ENCODE measurements at regions of chr1 and their contacts with region 1.

Region 1: DNA sequence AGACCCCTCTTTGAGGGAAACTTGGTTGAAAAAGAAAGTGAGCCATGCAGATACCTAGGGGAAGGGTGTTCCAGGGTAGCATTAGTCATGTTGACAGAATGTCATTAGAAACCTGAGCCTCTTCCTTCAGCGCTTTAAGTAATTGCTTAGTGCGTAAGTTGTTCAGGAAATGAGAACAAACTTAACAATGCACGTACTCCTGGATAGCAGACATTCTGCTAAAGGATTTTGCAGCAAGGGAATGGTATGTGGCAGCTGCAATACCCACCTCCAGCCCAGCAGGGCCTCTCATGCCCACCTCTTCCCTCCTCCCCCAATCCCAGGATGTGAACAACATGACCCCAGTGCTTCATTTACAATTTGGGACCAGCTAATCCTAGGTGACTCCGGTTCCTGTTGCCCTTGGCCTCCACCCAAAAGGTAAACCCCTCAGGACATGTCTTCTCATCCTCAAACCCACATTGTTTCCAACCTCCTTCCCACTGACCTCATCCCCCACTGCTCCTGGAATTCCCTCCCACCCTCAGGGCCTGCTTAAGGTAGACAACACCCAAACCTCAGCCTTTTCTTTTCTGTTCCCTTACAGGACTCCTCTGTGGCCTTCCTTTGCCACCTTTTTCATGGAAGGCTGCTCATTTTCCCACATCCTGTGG is 98.0 kb upstream of the BCAR3 start:
- DNase-seq: peak; percentile 100
- H3K4me3 Mint-ChIP-seq: peak overlapping the region; percentile 44
- H3K27ac Mint-ChIP-seq: peak overlapping the region; percentile 92
- H3K4me1 Mint-ChIP-seq: peaks cover 51% of the 10 kb centered on the region
- H3K27me3 Mint-ChIP-seq: no peaks in the 10 kb centered on the region
- CTCF ChIP-seq: no peak

Region 2: DNA sequence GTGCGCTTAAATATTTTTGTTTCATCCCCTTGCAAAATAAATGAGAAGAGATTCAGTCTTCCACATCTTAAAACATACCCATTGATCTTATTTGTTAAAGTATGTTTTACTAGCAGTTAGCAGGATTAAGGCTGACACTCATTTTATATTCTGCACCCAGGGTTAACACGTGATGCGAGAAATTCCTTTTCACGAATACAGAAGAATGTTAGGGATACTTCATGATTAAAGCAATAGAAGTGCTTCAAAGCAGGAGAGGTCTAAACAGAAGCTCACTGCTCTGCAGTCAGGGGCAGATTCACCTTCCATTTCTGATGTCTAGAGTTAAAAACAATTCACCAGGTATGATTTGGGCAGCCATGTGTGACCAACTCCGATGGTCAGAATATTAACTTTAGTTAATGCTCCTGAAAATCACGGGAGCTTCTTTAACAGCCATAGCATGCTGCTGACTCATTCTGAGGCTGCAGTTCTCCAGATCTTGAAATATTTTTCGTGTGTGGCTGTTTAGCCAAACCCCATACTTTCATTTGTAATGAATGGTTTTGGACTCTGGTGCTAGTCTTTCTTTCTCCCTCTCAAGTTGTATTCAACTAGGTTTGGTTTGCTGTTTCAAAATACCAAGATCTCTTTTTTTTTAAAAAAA is 117.7 kb before region 1 on chr1:
- CTCF ChIA-PET with region 1: interaction called, 5 read pairs
- POLR2A ChIA-PET with region 1: interaction called, 12 read pairs
- intact Hi-C with region 1: no loop called
- DNase-seq: peak; percentile 46
- H3K4me3 Mint-ChIP-seq: peak overlapping the region; percentile 43
- H3K27ac Mint-ChIP-seq: peak overlapping the region; percentile 91
- H3K4me1 Mint-ChIP-seq: peaks cover 60% of the 10 kb centered on the region
- H3K27me3 Mint-ChIP-seq: no peaks in the 10 kb centered on the region
- CTCF ChIP-seq: no peak

Region 3: GRCh38 chr1:93692983-93693591 is 86.6 kb before region 1 on chr1:
- CTCF ChIA-PET with region 1: interaction called, 3 read pairs
- POLR2A ChIA-PET with region 1: interaction called, 46 read pairs
- intact Hi-C with region 1: no loop called
- DNase-seq: peak; percentile 86
- H3K4me3 Mint-ChIP-seq: no peak overlapping the region
- H3K27ac Mint-ChIP-seq: no peak overlapping the region
- H3K4me1 Mint-ChIP-seq: no peaks in the 10 kb centered on the region
- H3K27me3 Mint-ChIP-seq: no peaks in the 10 kb centered on the region
- CTCF ChIP-seq: no peak

Region 4: GRCh38 chr1:93740601-93741031 is 39.0 kb before region 1 on chr1:
- CTCF ChIA-PET with region 1: no interaction called
- POLR2A ChIA-PET with region 1: interaction called, 10 read pairs
- intact Hi-C with region 1: loop called (anchors 2 kb)
- DNase-seq: no peak
- H3K4me3 Mint-ChIP-seq: no peak overlapping the region
- H3K27ac Mint-ChIP-seq: no peak overlapping the region
- H3K4me1 Mint-ChIP-seq: peaks cover 42% of the 10 kb centered on the region
- H3K27me3 Mint-ChIP-seq: no peaks in the 10 kb centered on the region
- CTCF ChIP-seq: no peak

Region 5: DNA sequence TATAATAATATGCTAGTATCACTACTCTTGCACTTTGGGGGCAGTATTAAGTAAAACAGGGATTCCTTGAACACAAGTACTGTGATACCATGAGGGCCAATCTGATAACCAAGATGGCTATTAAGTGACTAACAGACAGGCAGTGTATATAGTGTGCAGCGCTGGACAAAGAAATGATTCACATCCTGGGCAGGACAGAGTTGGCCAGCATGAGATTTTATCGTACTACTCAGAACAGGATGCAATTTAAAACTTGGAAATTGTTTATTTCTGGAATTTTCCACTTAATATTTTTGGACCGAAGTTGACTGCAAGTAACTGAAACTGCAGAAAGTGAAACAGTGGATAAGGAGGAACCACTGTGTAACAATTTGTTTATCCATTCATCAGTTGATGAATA is 24.7 kb after region 1 on chr1:
- CTCF ChIA-PET with region 1: interaction called, 4 read pairs
- POLR2A ChIA-PET with region 1: interaction called, 22 read pairs
- intact Hi-C with region 1: loop called (anchors 2 kb)
- DNase-seq: peak; percentile 85
- H3K4me3 Mint-ChIP-seq: peak overlapping the region; percentile 28
- H3K27ac Mint-ChIP-seq: peak overlapping the region; percentile 86
- H3K4me1 Mint-ChIP-seq: peaks cover 25% of the 10 kb centered on the region
- H3K27me3 Mint-ChIP-seq: no peaks in the 10 kb centered on the region
- CTCF ChIP-seq: no peak

Region 6: DNA sequence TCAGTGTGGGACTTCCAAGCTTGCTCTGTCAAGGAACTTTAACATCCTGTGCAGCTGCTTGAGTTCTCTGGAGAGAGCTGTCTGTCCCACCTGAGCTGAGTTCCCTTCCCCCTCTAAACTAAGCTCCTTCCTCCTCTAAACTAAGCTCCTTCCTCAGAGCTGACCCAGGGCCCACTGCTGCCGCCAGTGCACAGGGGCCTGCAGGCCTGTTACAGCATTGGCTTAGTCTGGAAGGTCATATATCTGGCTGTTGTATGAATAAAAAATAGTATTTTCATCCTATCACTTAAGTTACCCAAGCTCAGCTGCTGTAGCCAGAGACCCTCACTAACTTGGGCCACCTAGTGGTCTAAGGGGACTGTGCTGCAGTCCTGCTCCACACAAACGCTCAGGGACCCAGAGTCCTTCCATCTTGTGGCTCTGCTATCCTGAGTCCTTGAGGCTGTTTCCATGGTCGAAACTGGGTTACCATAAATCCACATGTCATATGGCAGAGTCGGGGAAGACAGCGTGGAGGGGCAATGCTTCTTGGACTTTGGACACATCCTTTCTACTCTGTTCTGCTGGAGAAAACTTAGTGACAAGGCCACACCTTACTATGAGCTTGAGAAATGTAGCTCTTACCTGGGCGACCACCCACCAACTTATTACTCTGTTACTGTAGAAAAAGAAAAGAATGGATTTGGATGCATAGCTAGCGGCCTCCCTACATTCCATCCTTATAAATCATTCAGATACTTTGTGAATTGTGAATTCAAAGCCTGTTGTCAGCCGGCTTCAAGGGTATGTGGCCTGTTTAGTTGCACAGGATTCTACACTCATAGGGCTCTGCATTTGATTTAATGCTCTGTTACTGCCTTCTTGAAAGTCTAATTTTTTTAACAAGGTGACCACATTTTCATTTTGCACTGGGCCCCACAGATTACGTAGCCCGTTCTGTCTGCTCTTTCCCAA is 200.9 kb after region 1 on chr1:
- CTCF ChIA-PET with region 1: no interaction called
- POLR2A ChIA-PET with region 1: no interaction called
- intact Hi-C with region 1: no loop called
- DNase-seq: no peak
- H3K4me3 Mint-ChIP-seq: no peak overlapping the region
- H3K27ac Mint-ChIP-seq: no peak overlapping the region
- H3K4me1 Mint-ChIP-seq: no peaks in the 10 kb centered on the region
- H3K27me3 Mint-ChIP-seq: no peaks in the 10 kb centered on the region
- CTCF ChIP-seq: no peak

Measured in MCF 10A (cell line).